CD4-positive, alpha-beta memory T cell (primary cell): ENCODE measurements at regions of chr9 and their contacts with region 1.

Region 1: DNA sequence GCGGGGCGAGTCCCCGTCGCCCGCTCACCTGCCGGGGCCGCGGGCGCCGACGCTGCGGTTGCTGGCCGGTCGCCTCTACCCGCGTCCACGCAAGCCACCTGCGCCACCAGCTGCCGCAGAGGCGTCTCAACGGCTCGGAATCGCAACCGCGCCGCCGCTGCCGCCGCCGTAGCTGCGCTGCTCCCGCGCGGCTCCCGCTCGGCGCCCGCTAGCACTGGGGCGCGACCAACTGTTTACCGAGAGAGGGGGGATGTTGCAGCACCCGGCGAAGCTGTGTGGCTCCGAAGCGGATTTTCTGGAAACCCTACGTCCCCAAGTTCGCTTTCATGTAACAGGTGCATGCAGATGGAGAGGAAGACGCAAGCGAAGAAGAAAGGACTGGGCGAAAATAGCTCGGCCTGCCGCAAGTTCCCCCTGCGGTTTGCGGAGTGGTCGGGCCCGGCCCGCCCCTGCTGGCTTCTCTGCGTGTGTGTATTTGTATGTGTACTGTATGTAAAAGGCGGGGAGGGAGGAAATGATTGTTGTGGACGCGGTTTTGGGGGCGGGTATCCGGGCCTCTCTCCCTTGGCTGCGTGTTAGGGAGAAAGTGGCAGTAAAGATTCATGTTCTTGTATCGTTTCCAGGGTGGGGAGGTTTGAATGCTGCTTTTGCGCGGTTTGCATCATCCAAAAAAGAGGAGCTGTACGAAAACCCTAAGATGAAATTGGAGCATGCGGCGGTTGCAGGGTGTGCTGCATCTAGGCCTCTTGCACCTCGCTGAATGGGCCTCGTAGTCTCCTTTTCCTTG is at the start of gene PSIP1:
- DNase-seq: peak; percentile 93 to 95 (median 94)
- H3K4me3 ChIP-seq: peak within 1 kb of the TSS; percentile 53 to 67
- H3K4me3 Mint-ChIP-seq: peak within 1 kb of the TSS; percentile 90 to 98 (median 96)
- H3K27ac ChIP-seq: peak within 1 kb of the TSS; percentile 83
- H3K27ac Mint-ChIP-seq: peak within 1 kb of the TSS; percentile 94 to 100 (median 99)
- H3K4me1 ChIP-seq: peaks cover 51% of the 10 kb centered on the region
- H3K4me1 Mint-ChIP-seq: peaks cover 43 to 60% (median 53%) of the 10 kb centered on the region in 4 donors
- H3K27me3 ChIP-seq: no peaks in the 10 kb centered on the region
- H3K27me3 Mint-ChIP-seq: no peaks in the 10 kb centered on the region
- total RNA-seq, gene PSIP1: 181 to 188 TPM

Region 2: DNA sequence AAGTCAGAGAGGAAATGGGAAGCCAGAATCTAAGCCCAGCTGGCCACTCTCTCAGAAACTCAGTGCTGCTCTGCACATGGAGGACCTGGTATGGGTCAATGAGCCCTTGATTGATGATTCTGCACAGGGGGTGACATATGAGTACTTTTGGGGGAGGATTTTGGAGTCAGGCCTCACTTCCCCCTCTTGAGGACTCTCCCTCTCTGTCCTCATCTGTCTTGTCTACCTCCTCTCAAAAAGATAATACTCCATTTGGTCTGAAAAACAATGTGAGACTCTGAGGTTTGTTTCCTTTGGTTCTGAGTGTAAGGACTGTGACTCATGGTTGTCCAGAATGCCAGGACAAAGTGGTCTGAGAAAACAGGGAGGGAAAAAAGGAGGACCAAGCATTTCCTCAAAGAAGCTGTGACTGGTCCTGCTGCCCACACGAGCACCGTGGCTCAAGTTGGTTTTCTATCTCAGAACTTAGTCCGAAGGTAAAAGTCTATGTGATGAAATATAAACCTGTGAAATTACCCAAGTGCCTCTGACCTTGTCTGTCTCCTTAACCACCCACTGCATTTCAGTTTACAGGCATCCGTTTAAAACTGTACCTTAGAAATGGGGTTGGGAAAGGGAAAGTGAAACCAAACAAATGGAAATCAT is 215.1 kb before region 1 on chr9:
- CTCF ChIA-PET with region 1: no interaction called
- POLR2A ChIA-PET with region 1: interaction called, 11 read pairs
- intact Hi-C with region 1: no loop called
- DNase-seq: peak; percentile 40 to 67 (median 57)
- H3K4me3 ChIP-seq: peak overlapping the region; percentile 31 to 46
- H3K4me3 Mint-ChIP-seq: peak overlapping the region; percentile 74 to 89 (median 85)
- H3K27ac ChIP-seq: peak overlapping the region; percentile 84
- H3K27ac Mint-ChIP-seq: peak overlapping the region; percentile 92 to 99 (median 97)
- H3K4me1 ChIP-seq: peaks cover 77% of the 10 kb centered on the region
- H3K4me1 Mint-ChIP-seq: peaks cover 61 to 87% (median 76%) of the 10 kb centered on the region in 4 donors
- H3K27me3 ChIP-seq: no peaks in the 10 kb centered on the region
- H3K27me3 Mint-ChIP-seq: no peaks in the 10 kb centered on the region

Region 3: GRCh38 chr9:15422372-15423230 is 88.4 kb before region 1 on chr9 and contains the start of gene SNAPC3:
- CTCF ChIA-PET with region 1: interaction called, 4 read pairs
- POLR2A ChIA-PET with region 1: interaction called, 30 read pairs
- intact Hi-C with region 1: loop called (anchors 1 kb)
- DNase-seq: peak; percentile 92 to 94 (median 94)
- H3K4me3 ChIP-seq: peak within 1 kb of the TSS; percentile 72 to 98
- H3K4me3 Mint-ChIP-seq: peak within 1 kb of the TSS; percentile 88 to 95 (median 93)
- H3K27ac ChIP-seq: peak within 1 kb of the TSS; percentile 62
- H3K27ac Mint-ChIP-seq: peak within 1 kb of the TSS; percentile 91 to 98 (median 95)
- H3K4me1 ChIP-seq: peaks cover 45% of the 10 kb centered on the region
- H3K4me1 Mint-ChIP-seq: peaks cover 22 to 43% (median 32%) of the 10 kb centered on the region in 4 donors
- H3K27me3 ChIP-seq: no peaks in the 10 kb centered on the region
- H3K27me3 Mint-ChIP-seq: no peaks in the 10 kb centered on the region
- total RNA-seq, gene SNAPC3: 33.3 to 34.2 TPM

Region 4: GRCh38 chr9:15469406-15469805 is 41.6 kb before region 1 on chr9:
- CTCF ChIA-PET with region 1: interaction called, 6 read pairs
- POLR2A ChIA-PET with region 1: interaction called, 9 read pairs
- intact Hi-C with region 1: loop called (anchors 5 kb)
- DNase-seq: no peak
- H3K4me3 ChIP-seq: no peak overlapping the region
- H3K4me3 Mint-ChIP-seq: no peak overlapping the region
- H3K27ac ChIP-seq: no peak overlapping the region
- H3K27ac Mint-ChIP-seq: peak overlapping the region in 1 of 7 donors; percentile 3
- H3K4me1 ChIP-seq: no peaks in the 10 kb centered on the region
- H3K4me1 Mint-ChIP-seq: peaks cover 5 to 20% (median 8%) of the 10 kb centered on the region in 4 donors
- H3K27me3 ChIP-seq: no peaks in the 10 kb centered on the region
- H3K27me3 Mint-ChIP-seq: no peaks in the 10 kb centered on the region

Region 5: DNA sequence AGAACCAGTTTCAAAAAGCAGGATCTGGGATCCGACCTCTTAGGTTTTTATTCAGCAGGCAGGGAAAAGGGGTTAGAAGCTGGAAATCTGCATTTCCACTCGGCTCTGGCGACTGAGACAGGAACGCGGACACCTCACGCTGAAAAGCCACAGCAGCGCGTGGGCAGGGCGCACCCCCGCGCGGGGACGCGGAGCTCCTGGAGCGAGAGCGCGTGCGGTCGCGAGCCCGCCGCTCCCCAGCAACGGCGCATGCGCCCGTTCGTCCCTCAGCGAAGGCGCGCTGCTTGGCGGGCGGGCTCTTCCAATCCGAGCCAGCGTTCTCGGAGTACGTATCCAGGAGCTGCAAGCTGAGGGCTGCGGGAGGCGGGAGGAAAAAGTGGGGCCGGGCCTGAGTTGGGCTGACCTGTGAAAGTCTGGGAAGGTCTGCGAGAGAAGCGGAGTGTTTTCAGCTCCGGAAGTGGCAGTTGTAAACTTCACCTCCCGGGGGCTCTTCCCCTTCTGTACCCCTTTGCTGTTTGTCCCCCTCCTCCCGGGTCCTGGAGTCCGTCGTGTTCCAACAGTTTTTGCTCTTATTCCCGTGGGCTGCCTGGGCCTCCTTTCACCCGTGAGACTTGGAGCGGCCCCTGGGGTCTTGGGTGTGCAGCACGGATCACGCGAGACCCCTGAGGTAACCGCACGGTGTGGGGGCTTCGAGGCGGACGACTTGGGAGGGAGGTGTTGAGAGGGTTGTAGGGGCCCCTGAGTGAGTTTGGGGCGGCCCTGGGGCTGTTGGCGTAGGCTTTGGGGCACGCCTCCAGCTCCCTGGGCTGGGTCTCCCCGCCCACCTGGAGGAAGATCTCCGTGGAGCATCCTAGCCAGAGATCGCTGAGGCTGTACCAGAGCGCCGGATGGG is 41.9 kb after region 1 on chr9 and contains the start of gene CCDC171:
- CTCF ChIA-PET with region 1: interaction called, 29 read pairs
- POLR2A ChIA-PET with region 1: interaction called, 67 read pairs
- intact Hi-C with region 1: loop called (anchors 1 kb)
- DNase-seq: peak; percentile 85 to 90 (median 87)
- H3K4me3 ChIP-seq: peak within 1 kb of the TSS; percentile 79 to 93
- H3K4me3 Mint-ChIP-seq: peak within 1 kb of the TSS; percentile 87 to 97 (median 96)
- H3K27ac ChIP-seq: peak within 1 kb of the TSS; percentile 45
- H3K27ac Mint-ChIP-seq: peak within 1 kb of the TSS; percentile 69 to 91 (median 87)
- H3K4me1 ChIP-seq: peaks cover 18% of the 10 kb centered on the region
- H3K4me1 Mint-ChIP-seq: peaks cover 4 to 22% (median 10%) of the 10 kb centered on the region in 4 donors
- H3K27me3 ChIP-seq: no peaks in the 10 kb centered on the region
- H3K27me3 Mint-ChIP-seq: no peaks in the 10 kb centered on the region
- total RNA-seq, gene CCDC171: 1.8 to 1.9 TPM